Gastrocnemius medialis (tissue), 4 donors: ENCODE measurements at regions of chr18 and their contacts with region 1.

Region 1: GRCh38 chr18:7221424-7222155 is 9.3 kb upstream of the LRRC30 start:
- DNase-seq: peak; percentile 22 to 66
- ATAC-seq: peak; percentile 98 to 100
- H3K4me3 ChIP-seq: no peak overlapping the region
- H3K27ac ChIP-seq: no peak overlapping the region
- H3K4me1 ChIP-seq: peaks cover 3 to 7% of the 10 kb centered on the region in 2 donors
- H3K27me3 ChIP-seq: no peaks in the 10 kb centered on the region
- CTCF ChIP-seq: peak; percentile 58 to 88 (median 80)
- POLR2A ChIP-seq: no peak

Region 2: GRCh38 chr18:7259475-7260081 is 38.0 kb after region 1 on chr18:
- in situ Hi-C with region 1: no loop called
- intact Hi-C with region 1: loop called (anchors 5 kb)
- DNase-seq: no peak
- ATAC-seq: peak in 1 of 2 donors; percentile 20
- H3K4me3 ChIP-seq: peak overlapping the region; percentile 4 to 23 (median 13)
- H3K27ac ChIP-seq: peak overlapping the region; percentile 1 to 58 (median 28)
- H3K4me1 ChIP-seq: peaks cover 32 to 37% of the 10 kb centered on the region in 2 donors
- H3K27me3 ChIP-seq: no peaks in the 10 kb centered on the region
- CTCF ChIP-seq: no peak
- POLR2A ChIP-seq: no peak

Region 3: DNA sequence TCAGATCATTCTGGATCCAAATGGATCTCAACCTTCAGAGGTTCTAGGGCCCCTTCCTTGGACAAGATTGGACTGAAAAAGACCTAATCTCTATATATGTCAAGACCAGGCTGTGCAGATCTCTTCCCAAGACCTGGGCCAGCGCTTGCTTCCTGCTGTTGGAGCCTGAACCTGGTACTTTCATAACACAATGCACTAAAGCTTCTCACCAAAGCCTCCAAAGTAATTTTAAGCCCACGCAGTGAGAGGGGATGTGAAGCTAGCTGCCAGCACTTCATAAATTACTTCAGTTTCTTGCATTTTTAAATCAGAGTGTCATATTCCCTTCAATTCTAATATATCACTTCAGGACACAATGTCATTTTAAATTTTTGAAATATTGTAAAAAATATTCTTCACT is 60.0 kb after region 1 on chr18:
- in situ Hi-C with region 1: no loop called
- intact Hi-C with region 1: no loop called
- DNase-seq: no peak
- ATAC-seq: no peak
- H3K4me3 ChIP-seq: no peak overlapping the region
- H3K27ac ChIP-seq: no peak overlapping the region
- H3K4me1 ChIP-seq: no peaks in the 10 kb centered on the region
- H3K27me3 ChIP-seq: no peaks in the 10 kb centered on the region
- CTCF ChIP-seq: no peak
- POLR2A ChIP-seq: no peak

Region 4: DNA sequence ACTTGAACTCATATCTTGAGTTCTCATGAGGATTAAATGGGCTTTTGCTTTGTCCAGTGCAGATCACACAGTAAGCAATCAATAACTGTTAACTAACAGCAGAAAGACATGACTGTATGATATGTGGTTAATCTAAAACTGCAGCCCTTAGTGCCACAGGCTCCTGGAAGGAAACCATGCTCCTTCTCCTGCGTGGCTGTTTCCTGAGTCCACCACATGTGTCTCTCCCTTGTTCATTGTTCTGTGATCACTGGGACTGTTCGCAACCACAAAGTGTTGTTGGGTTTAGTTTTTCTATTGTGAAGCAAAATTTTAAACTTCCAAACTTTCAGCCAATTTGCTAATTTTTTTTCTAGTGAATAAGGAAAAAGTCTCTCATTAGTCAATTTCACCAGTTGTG is 214.6 kb after region 1 on chr18:
- in situ Hi-C with region 1: no loop called
- intact Hi-C with region 1: no loop called
- DNase-seq: no peak
- ATAC-seq: no peak
- H3K4me3 ChIP-seq: no peak overlapping the region
- H3K27ac ChIP-seq: no peak overlapping the region
- H3K4me1 ChIP-seq: peaks cover 0 to 6% of the 10 kb centered on the region in 2 donors
- H3K27me3 ChIP-seq: no peaks in the 10 kb centered on the region
- CTCF ChIP-seq: no peak
- POLR2A ChIP-seq: no peak

Region 5: DNA sequence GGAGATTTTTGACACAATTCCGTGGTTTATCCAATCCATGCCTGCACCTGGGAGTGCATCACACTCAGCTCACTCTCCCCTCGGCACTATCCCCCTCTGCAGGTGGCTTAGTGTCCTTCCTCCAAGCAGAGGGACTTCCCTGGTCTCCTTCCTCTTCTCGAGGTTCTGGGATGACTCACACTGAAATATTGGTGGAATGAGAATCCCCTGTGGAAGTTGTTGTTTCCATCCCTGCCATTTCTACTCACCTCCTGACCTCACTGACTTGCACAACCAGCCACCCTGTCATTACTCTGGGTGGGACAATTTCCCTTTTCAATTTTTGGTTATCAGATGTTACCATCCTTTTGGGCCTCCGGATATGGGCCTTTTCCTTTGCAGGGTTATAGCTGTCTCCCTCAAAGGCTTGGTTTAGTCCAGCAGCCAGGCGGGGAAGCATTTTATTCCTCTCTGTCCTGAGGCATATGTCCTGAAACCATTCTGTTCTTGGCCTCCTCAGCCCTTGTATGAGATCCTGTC is 405.4 kb after region 1 on chr18:
- in situ Hi-C with region 1: no loop called
- intact Hi-C with region 1: no loop called
- DNase-seq: no peak
- ATAC-seq: peak; percentile 55 to 60
- H3K4me3 ChIP-seq: no peak overlapping the region
- H3K27ac ChIP-seq: peak overlapping the region in 3 of 4 donors; percentile 0 to 27 (median 13)
- H3K4me1 ChIP-seq: peaks cover 49 to 53% of the 10 kb centered on the region in 2 donors
- H3K27me3 ChIP-seq: no peaks in the 10 kb centered on the region
- CTCF ChIP-seq: no peak
- POLR2A ChIP-seq: no peak

Region 6: DNA sequence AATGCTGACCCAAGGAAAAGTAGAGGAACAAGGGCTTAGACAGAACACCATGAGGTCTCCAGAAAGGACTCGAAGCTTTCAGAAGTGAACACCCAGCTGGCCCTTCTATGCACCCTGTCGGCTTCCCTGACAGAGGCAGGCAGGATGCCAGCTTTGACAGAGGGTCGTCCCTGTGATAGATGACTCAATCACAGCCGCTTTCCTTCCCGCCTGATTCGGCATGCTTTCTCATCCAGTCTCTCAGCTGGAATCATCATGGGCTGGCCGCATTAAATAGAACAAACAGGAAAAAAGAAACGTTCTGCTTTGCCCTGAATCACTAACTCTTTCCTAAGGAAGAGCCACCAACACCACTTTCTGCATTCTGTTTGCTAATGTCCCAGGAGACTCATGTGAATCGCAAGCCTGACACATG is 1247.3 kb after region 1 on chr18:
- in situ Hi-C with region 1: loop called in 1 of 4 experiments (anchors 10 kb)
- intact Hi-C with region 1: no loop called
- DNase-seq: no peak
- ATAC-seq: peak in 1 of 2 donors; percentile 31
- H3K4me3 ChIP-seq: no peak overlapping the region
- H3K27ac ChIP-seq: peak overlapping the region in 1 of 4 donors; percentile 22
- H3K4me1 ChIP-seq: peaks cover 8 to 9% of the 10 kb centered on the region in 2 donors
- H3K27me3 ChIP-seq: peaks cover 0 to 3% (median 0%) of the 10 kb centered on the region in 3 donors
- CTCF ChIP-seq: no peak
- POLR2A ChIP-seq: no peak